ENCODE measurements at regions of chr10 and their contacts with region 1.

Region 1: GRCh38 chr10:70880077-70880534 is 8.3 kb downstream of the PCBD1 start:
- DNase-seq: peak in 3 of 4 donors; percentile 68 to 87 (median 79)
- ATAC-seq: peak; percentile 97
- H3K4me3 ChIP-seq: no peak overlapping the region
- H3K27ac ChIP-seq: no peak overlapping the region
- H3K4me1 ChIP-seq: no peaks in the 10 kb centered on the region
- H3K27me3 ChIP-seq: no peaks in the 10 kb centered on the region
- CTCF ChIP-seq: peak; percentile 83 to 92

Region 2: DNA sequence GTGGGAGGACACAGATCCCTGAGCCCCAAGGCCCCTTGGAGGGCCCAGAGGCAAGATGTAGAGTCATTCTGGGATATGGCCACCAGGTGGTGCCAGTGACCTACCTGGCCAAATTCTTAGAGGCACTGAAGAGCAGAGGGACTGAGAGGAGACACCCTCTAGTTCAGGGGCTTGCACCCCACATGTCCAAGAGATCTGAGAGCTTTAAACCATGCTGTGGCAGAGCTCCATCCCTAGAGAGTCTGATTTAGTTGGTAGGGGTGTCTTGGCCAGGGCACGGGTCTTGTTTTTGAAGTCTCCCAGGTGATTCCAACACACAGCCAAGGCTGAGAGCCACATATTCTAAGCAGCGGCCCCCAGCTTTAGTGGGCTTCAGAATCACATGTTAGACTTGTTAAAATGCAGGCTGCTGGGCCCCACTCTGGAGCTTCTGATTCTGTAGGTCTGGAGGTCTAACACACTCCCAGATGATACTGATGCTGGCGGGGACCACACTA is 330.1 kb before region 1 on chr10:
- intact Hi-C with region 1: loop called in 1 of 2 experiments (anchors 10 kb)
- DNase-seq: peak; percentile 58 to 72 (median 65)
- ATAC-seq: peak; percentile 82
- H3K4me3 ChIP-seq: no peak overlapping the region
- H3K27ac ChIP-seq: no peak overlapping the region
- H3K4me1 ChIP-seq: peaks cover 0 to 6% of the 10 kb centered on the region in 2 donors
- H3K27me3 ChIP-seq: no peaks in the 10 kb centered on the region
- CTCF ChIP-seq: peak; percentile 86 to 88

Region 3: DNA sequence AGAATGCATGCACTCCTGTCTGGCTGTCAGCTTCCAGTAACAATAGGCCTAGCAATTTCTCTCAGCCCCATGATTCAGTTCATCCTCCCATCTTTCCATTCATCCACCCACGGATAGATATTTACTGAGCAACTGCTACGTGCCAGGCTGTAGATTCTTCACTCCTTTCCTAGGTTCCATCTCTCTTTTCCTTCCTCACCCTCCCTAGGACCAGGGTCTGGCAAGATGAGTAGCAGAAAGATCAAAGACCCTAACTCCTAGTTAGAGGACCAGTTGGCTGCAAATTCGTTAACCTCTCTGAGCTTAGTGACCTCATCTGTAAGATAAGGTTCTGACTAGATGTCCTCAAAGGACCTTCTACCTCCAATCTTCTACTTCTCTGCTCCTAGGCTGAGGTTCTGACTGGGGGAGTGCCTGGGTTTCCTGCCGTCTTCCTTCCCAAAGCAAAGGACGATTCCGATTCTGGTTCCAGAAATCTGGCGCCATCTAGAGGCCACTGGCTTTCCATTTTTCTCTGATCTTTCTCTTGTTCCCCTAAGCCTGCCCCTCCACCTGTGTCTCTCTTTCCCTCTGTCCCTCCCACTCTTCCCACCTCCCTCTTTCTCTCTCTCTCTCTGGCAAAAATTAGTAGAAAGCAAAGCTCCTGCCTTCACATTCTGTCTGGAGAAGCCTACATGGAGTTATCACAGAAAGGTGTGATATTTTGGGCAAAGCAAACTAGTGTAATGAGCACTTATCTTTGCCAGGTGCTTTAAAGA is 121.2 kb before region 1 on chr10:
- intact Hi-C with region 1: no loop called
- DNase-seq: peak in 3 of 4 donors; percentile 52 to 83 (median 65)
- ATAC-seq: peak; percentile 75
- H3K4me3 ChIP-seq: no peak overlapping the region
- H3K27ac ChIP-seq: no peak overlapping the region
- H3K4me1 ChIP-seq: peaks cover 0 to 3% of the 10 kb centered on the region in 2 donors
- H3K27me3 ChIP-seq: no peaks in the 10 kb centered on the region
- CTCF ChIP-seq: peak; percentile 53 to 64

Region 4: DNA sequence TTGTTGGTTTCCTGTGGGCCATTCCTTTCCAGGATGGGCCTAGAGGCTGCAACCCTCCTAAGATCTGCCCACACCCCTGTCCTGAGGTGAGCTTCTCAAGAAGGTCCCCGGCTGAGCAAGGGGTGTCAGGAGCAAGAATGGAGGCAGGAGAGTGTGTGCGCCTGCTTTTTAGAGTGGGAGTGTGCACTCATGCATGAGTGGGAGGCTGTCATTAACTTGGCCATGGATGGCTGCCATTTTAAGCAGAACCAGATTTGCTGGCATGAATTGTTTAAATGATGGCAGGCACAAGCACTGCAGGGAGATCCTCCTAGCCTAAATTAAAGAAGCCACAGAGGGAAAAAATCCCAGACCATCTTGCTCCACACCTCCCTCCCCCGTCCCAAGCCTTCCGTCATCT is 67.3 kb before region 1 on chr10:
- intact Hi-C with region 1: loop called in 1 of 2 experiments (anchors 5 kb)
- DNase-seq: no peak
- ATAC-seq: no peak
- H3K4me3 ChIP-seq: no peak overlapping the region
- H3K27ac ChIP-seq: no peak overlapping the region
- H3K4me1 ChIP-seq: peaks cover 3 to 19% of the 10 kb centered on the region in 2 donors
- H3K27me3 ChIP-seq: no peaks in the 10 kb centered on the region
- CTCF ChIP-seq: no peak

Region 5: GRCh38 chr10:70820976-70821755 is 58.9 kb before region 1 on chr10:
- intact Hi-C with region 1: loop called in 1 of 2 experiments (anchors 10 kb)
- DNase-seq: no peak
- ATAC-seq: no peak
- H3K4me3 ChIP-seq: no peak overlapping the region
- H3K27ac ChIP-seq: no peak overlapping the region
- H3K4me1 ChIP-seq: peaks cover 3 to 19% of the 10 kb centered on the region in 2 donors
- H3K27me3 ChIP-seq: no peaks in the 10 kb centered on the region
- CTCF ChIP-seq: no peak

Measured in left lung (tissue), 14 donors.